Mammary epithelial cell (primary cell): ENCODE measurements at regions of chr7 and their contacts with region 1.

Region 1: GRCh38 chr7:129083525-129083924 is 28.6 kb upstream of the TNPO3 start:
- DNase-seq: no peak
- H3K4me3 ChIP-seq: no peak overlapping the region
- H3K27ac ChIP-seq: no peak overlapping the region
- H3K4me1 ChIP-seq: no peaks in the 10 kb centered on the region
- H3K27me3 ChIP-seq: no peaks in the 10 kb centered on the region
- CTCF ChIP-seq: no peak

Region 2: GRCh38 chr7:128236924-128237586 is 846.5 kb before region 1 on chr7:
- CTCF ChIA-PET with region 1: no interaction called
- dilution Hi-C with region 1: no loop called
- in situ Hi-C with region 1: no loop called
- intact Hi-C with region 1: no loop called
- DNase-seq: peak; percentile 99
- H3K4me3 ChIP-seq: no peak overlapping the region
- H3K27ac ChIP-seq: peak overlapping the region; percentile 75
- H3K4me1 ChIP-seq: peaks cover 19% of the 10 kb centered on the region
- H3K27me3 ChIP-seq: no peaks in the 10 kb centered on the region
- CTCF ChIP-seq: no peak

Region 3: GRCh38 chr7:128830231-128831177 is 253.0 kb before region 1 on chr7 and contains the start of gene FLNC:
- CTCF ChIA-PET with region 1: no interaction called
- dilution Hi-C with region 1: no loop called
- in situ Hi-C with region 1: no loop called
- intact Hi-C with region 1: no loop called
- DNase-seq: peak; percentile 19
- H3K4me3 ChIP-seq: peak within 1 kb of the TSS in 2 of 3 experiments; percentile 27 to 30
- H3K27ac ChIP-seq: no peak within 1 kb of the TSS
- H3K4me1 ChIP-seq: peaks cover 9% of the 10 kb centered on the region
- H3K27me3 ChIP-seq: peaks cover 9% of the 10 kb centered on the region
- CTCF ChIP-seq: no peak
- total RNA-seq, gene FLNC: 1.8 to 1.9 TPM

Region 4: GRCh38 chr7:129115676-129116075 is 32.2 kb after region 1 on chr7:
- CTCF ChIA-PET with region 1: no interaction called
- dilution Hi-C with region 1: loop called (anchors 5 kb)
- in situ Hi-C with region 1: no loop called
- intact Hi-C with region 1: no loop called
- DNase-seq: no peak
- H3K4me3 ChIP-seq: no peak overlapping the region
- H3K27ac ChIP-seq: no peak overlapping the region
- H3K4me1 ChIP-seq: peaks cover 3% of the 10 kb centered on the region
- H3K27me3 ChIP-seq: no peaks in the 10 kb centered on the region
- CTCF ChIP-seq: no peak